Naive thymus-derived CD8-positive, alpha-beta T cell (primary cell): ENCODE measurements at regions of chr17 and their contacts with region 1.

Region 1: GRCh38 chr17:62724398-62725146 is 83.5 kb downstream of the MARCHF10 start:
- DNase-seq: peak; percentile 33 to 80 (median 58)
- ATAC-seq: peak; percentile 96 to 98
- H3K4me3 Mint-ChIP-seq: peak overlapping the region; percentile 75 to 88 (median 82)
- H3K27ac Mint-ChIP-seq: peak overlapping the region; percentile 95 to 99 (median 98)
- H3K4me1 Mint-ChIP-seq: peaks cover 13 to 36% (median 23%) of the 10 kb centered on the region in 4 donors
- H3K27me3 Mint-ChIP-seq: no peaks in the 10 kb centered on the region

Region 2: DNA sequence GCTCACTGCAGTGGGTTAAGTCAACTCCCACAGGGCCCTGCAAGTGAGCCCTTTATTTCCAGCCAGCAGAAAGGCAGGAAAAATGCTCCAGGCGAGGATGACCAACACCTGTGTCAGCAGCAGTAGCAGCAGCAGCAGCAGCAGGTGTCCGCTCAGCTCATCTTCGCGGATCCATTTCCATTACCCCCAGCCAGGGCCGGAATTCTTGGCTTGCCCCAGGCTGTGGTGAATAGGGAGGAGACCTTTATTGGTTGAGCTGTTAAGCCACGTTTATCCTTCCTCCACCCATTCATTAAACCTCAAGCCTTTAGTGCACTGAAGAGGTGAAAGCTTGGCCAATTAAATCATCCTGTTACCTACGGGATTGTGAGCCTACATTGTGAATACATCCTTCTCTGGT is 37.3 kb after region 1 on chr17:
- POLR2A ChIA-PET with region 1: no interaction called
- DNase-seq: no peak
- ATAC-seq: no peak
- H3K4me3 Mint-ChIP-seq: no peak overlapping the region
- H3K27ac Mint-ChIP-seq: no peak overlapping the region
- H3K4me1 Mint-ChIP-seq: no peaks in the 10 kb centered on the region
- H3K27me3 Mint-ChIP-seq: peaks cover 10 to 15% (median 12%) of the 10 kb centered on the region in 5 donors

Region 3: GRCh38 chr17:62778689-62779681 is 54.4 kb after region 1 on chr17:
- POLR2A ChIA-PET with region 1: no interaction called
- DNase-seq: peak in 1 of 10 donors; percentile 47
- ATAC-seq: no peak
- H3K4me3 Mint-ChIP-seq: no peak overlapping the region
- H3K27ac Mint-ChIP-seq: no peak overlapping the region
- H3K4me1 Mint-ChIP-seq: no peaks in the 10 kb centered on the region
- H3K27me3 Mint-ChIP-seq: peaks cover 4 to 18% (median 6%) of the 10 kb centered on the region in 5 donors

Region 4: DNA sequence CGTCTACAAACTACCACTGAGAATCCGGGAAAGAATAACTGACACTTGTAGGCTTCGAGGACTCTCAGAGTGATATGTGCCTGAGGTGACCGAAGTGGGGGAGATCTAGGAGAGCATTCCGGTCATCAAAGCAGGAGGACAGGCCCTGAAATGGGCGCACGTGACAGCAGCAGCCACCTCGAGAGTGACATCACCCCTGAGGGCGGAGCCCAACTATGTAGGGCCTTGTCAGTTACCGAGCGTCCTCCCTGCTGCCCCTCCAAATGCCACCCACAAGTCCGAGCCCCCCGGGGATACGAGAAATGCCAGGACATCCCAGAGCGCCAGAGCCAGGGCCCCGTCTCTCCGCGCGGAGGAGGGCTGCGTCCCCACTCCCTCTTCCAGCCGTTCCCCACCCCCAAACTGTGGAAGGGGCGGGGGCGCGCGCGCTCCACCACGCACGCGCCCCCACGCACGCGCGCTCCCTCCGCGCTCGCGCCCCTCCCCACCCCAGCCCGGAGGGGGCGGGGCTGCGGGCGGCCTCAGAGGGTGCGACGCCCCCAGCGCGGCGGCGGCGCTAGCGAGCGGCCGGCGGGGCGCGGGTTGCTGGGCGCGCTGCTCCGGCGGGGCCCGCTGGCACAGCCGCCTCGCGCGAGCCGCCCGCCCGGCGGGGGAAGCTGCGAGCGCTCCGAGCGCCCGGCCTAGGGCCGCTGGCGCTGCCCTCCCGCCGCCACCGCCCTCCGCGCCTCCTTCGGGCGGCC is 241.3 kb after region 1 on chr17 and contains the start of gene TANC2:
- POLR2A ChIA-PET with region 1: interaction called, 12 read pairs
- DNase-seq: peak; percentile 76 to 95 (median 88)
- ATAC-seq: peak; percentile 74 to 75
- H3K4me3 Mint-ChIP-seq: peak within 1 kb of the TSS; percentile 89 to 98 (median 94)
- H3K27ac Mint-ChIP-seq: peak within 1 kb of the TSS; percentile 97 to 100 (median 98)
- H3K4me1 Mint-ChIP-seq: peaks cover 22 to 38% (median 31%) of the 10 kb centered on the region in 4 donors
- H3K27me3 Mint-ChIP-seq: peaks cover 0 to 2% (median 0%) of the 10 kb centered on the region in 5 donors
- polyA plus RNA-seq, gene TANC2: 4.0 to 6.0 (median 5.3) TPM